Mammary epithelial cell (primary cell): ENCODE measurements at regions of chr2 and their contacts with region 1.

Region 1: DNA sequence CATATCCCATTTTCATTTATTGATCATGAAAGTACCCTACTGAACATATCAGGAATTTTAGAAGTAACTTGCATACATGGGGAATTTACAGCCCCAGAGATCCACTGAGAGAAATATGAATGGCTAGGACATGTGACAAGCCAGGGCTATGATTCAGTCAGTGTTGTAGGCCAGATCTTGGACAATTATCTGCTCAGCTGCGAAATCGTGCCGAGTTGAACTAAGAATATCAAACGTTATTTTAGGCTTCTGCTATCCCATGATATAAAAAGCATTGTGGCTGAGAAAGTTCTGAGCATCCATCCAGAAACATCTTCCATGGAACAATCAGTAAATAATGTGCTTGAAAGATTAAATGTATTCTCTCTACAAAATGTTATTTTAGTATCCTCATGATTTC is 85.7 kb upstream of the UNC80 start:
- DNase-seq: no peak
- H3K4me3 ChIP-seq: no peak overlapping the region
- H3K27ac ChIP-seq: no peak overlapping the region
- H3K4me1 ChIP-seq: peaks cover 27% of the 10 kb centered on the region
- H3K27me3 ChIP-seq: no peaks in the 10 kb centered on the region
- CTCF ChIP-seq: no peak

Region 2: DNA sequence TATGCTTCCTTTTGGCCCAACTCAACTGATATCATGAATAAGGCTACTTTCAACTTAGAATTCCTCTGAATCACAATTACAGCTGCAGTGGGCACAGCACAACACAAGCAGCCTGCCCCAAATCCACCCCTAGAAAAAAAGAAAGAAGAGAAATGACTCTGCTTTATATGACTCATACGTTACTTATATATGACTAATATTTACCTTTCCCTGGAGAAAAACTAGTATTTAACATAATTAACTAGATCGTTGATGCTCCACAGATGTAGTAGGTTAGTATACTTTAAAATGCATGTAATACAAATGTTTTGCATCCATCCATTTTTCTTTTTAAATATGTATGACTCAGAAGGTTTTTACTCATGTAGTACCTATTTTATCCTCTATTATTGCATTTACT is 47.6 kb before region 1 on chr2:
- CTCF ChIA-PET with region 1: no interaction called
- dilution Hi-C with region 1: no loop called
- in situ Hi-C with region 1: no loop called
- intact Hi-C with region 1: loop called (anchors 5 kb)
- DNase-seq: peak; percentile 73
- H3K4me3 ChIP-seq: no peak overlapping the region
- H3K27ac ChIP-seq: no peak overlapping the region
- H3K4me1 ChIP-seq: peaks cover 48% of the 10 kb centered on the region
- H3K27me3 ChIP-seq: no peaks in the 10 kb centered on the region
- CTCF ChIP-seq: no peak

Region 3: GRCh38 chr2:209644842-209645241 is 41.1 kb before region 1 on chr2:
- CTCF ChIA-PET with region 1: interaction called, 28 read pairs
- dilution Hi-C with region 1: no loop called
- in situ Hi-C with region 1: no loop called
- intact Hi-C with region 1: loop called (anchors 5 kb)
- DNase-seq: no peak
- H3K4me3 ChIP-seq: no peak overlapping the region
- H3K27ac ChIP-seq: no peak overlapping the region
- H3K4me1 ChIP-seq: peaks cover 28% of the 10 kb centered on the region
- H3K27me3 ChIP-seq: no peaks in the 10 kb centered on the region
- CTCF ChIP-seq: no peak

Region 4: GRCh38 chr2:209726316-209726715 is 40.4 kb after region 1 on chr2:
- CTCF ChIA-PET with region 1: no interaction called
- dilution Hi-C with region 1: no loop called
- in situ Hi-C with region 1: no loop called
- intact Hi-C with region 1: loop called (anchors 5 kb)
- DNase-seq: peak; percentile 90
- H3K4me3 ChIP-seq: no peak overlapping the region
- H3K27ac ChIP-seq: peak overlapping the region; percentile 47
- H3K4me1 ChIP-seq: peaks cover 14% of the 10 kb centered on the region
- H3K27me3 ChIP-seq: no peaks in the 10 kb centered on the region
- CTCF ChIP-seq: no peak